B cell (primary cell): ENCODE measurements at regions of chr1 and their contacts with region 1.

Region 1: DNA sequence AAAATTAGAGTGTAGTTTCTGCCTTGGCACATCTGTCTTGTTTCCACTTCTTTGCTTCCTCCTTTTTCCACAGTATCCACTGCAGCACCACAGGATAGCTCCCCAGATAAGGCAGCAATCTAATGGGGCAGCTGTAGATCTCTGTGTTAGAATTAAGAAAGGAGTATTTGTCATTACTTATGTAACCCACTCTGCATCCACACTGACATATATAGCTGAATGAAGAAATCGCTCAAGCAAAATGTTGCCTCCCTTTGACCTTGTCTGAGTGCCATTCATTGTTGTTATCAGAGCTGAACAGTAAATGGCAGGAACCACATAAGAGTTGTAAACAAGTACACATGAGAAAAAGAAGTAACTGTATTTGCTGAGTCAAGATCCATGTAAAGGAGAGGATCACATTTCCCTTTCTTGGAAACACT is 45.9 kb upstream of the DPH5 start:
- DNase-seq: no peak
- ATAC-seq: no peak
- H3K4me3 ChIP-seq: no peak overlapping the region
- H3K4me3 Mint-ChIP-seq: no peak overlapping the region
- H3K27ac ChIP-seq: peak overlapping the region in 1 of 2 donors; percentile 50
- H3K27ac Mint-ChIP-seq: peak overlapping the region; percentile 58
- H3K4me1 ChIP-seq: peaks cover 15 to 24% of the 10 kb centered on the region in 2 donors
- H3K4me1 Mint-ChIP-seq: peaks cover 40% of the 10 kb centered on the region
- H3K27me3 ChIP-seq: no peaks in the 10 kb centered on the region
- H3K27me3 Mint-ChIP-seq: no peaks in the 10 kb centered on the region
- CTCF ChIP-seq: no peak

Region 2: DNA sequence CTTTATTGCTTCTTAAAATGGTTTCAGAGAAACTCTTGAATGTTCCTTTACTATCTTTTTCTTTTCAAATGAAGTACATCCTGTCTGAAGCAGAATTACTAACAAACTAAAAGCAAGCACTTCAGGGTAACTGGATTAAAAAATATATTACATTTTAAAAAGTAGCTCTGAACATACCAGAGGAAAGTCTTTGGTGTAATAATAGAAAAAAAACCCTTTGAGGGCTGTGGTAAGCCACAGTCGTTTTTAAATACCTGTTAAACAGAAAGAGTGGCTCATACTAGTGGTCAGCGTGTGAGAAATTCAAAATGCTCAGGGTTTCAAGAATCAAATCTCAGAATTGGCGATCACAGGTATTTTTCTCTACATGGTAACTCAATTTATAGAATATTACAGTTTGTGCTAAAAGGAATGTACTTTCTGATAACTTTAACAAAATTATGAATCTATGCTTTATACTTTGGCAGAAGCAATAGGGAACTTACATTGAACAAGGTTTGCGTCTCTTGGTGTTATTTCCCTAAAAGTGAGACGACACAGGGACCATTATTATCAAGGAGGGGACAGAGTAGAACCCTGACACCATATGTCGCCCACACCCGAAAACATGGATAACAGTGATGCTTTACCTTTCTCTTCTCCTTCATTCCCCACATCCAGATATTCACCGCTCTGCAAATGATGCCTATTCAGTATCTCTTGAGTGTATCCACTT is 51.1 kb after region 1 on chr1:
- CTCF ChIA-PET with region 1: no interaction called
- POLR2A ChIA-PET with region 1: interaction called, 6 read pairs
- intact Hi-C with region 1: loop called (anchors 5 kb)
- DNase-seq: peak; percentile 39
- ATAC-seq: peak; percentile 21
- H3K4me3 ChIP-seq: peak overlapping the region in 3 of 5 experiments; percentile 3 to 47 (median 6)
- H3K4me3 Mint-ChIP-seq: peak overlapping the region; percentile 73
- H3K27ac ChIP-seq: peak overlapping the region in 1 of 2 donors; percentile 58
- H3K27ac Mint-ChIP-seq: peak overlapping the region; percentile 44
- H3K4me1 ChIP-seq: peaks cover 17 to 31% of the 10 kb centered on the region in 2 donors
- H3K4me1 Mint-ChIP-seq: peaks cover 46% of the 10 kb centered on the region
- H3K27me3 ChIP-seq: no peaks in the 10 kb centered on the region
- H3K27me3 Mint-ChIP-seq: no peaks in the 10 kb centered on the region
- CTCF ChIP-seq: no peak